IMR-90 (cell line): ENCODE measurements at regions of chr6 and their contacts with region 1.

Region 1: GRCh38 chr6:160930547-160931377 is 60.8 kb upstream of the MAP3K4 start:
- DNase-seq: peak; percentile 71
- ATAC-seq: peak; percentile 99
- H3K4me3 ChIP-seq: peak overlapping the region; percentile 46
- H3K27ac ChIP-seq: no peak overlapping the region
- H3K4me1 ChIP-seq: no peaks in the 10 kb centered on the region
- H3K27me3 ChIP-seq: no peaks in the 10 kb centered on the region
- CTCF ChIP-seq: peak; percentile 97
- POLR2A ChIP-seq: peak; percentile 45; the same call in 1 of the 2 replicates
- RAD21 ChIP-seq: peak; percentile 98

Region 2: DNA sequence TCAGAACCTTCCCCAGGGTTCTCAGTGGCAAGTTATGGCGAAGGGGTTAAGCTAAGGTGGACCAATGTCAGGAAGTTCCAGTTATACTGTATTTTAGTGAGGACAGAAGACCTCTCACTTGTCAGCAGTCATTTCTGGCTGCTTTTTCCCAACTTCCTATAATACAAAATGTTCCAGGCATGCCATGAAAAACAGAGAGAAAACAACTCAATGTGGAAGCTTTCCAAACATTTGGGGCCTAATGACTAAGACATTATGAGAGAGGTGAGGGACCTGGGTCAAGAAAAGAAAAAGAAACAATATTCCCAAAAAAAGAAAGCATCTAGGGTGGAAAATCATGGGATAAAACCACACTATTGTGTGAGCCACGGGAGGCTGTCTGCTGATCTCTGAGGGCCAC is 39.1 kb before region 1 on chr6:
- CTCF ChIA-PET with region 1: no interaction called
- POLR2A ChIA-PET with region 1: no interaction called
- dilution Hi-C with region 1: no loop called
- in situ Hi-C with region 1: no loop called
- intact Hi-C with region 1: no loop called
- DNase-seq: no peak
- ATAC-seq: no peak
- H3K4me3 ChIP-seq: no peak overlapping the region
- H3K27ac ChIP-seq: no peak overlapping the region
- H3K4me1 ChIP-seq: no peaks in the 10 kb centered on the region
- H3K27me3 ChIP-seq: no peaks in the 10 kb centered on the region
- CTCF ChIP-seq: no peak
- POLR2A ChIP-seq: no peak
- RAD21 ChIP-seq: no peak

Region 3: DNA sequence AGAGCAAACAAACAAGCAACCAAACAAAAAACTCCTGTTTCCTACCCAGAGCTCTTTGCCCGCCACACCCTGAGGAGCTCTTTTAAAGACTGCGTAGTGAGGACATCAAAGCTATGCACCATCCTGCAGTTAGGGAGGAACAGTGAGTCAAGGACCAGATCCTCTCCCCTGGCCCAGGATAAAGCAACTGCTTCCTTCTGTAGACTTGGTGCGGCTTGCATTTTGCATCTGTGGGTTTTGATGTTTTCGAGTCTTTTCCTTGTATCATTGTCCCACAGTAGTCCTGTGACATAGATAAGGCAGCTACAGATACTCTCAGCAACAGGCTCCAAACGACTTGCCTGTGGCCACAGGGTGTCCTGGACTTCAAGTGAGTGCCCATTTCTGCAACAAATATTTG is 24.7 kb after region 1 on chr6:
- CTCF ChIA-PET with region 1: no interaction called
- POLR2A ChIA-PET with region 1: no interaction called
- dilution Hi-C with region 1: no loop called
- in situ Hi-C with region 1: no loop called
- intact Hi-C with region 1: no loop called
- DNase-seq: no peak
- ATAC-seq: no peak
- H3K4me3 ChIP-seq: no peak overlapping the region
- H3K27ac ChIP-seq: no peak overlapping the region
- H3K4me1 ChIP-seq: peaks cover under 1% of the 10 kb centered on the region; the same call in 1 of the 2 replicates
- H3K27me3 ChIP-seq: peaks cover 9% of the 10 kb centered on the region
- CTCF ChIP-seq: no peak
- POLR2A ChIP-seq: no peak
- RAD21 ChIP-seq: no peak

Region 4: GRCh38 chr6:160972111-160972510 is 41.3 kb after region 1 on chr6:
- CTCF ChIA-PET with region 1: interaction called, 4 read pairs
- POLR2A ChIA-PET with region 1: no interaction called
- dilution Hi-C with region 1: no loop called
- in situ Hi-C with region 1: no loop called
- intact Hi-C with region 1: loop called (anchors 1 kb)
- DNase-seq: peak; percentile 97
- ATAC-seq: peak; percentile 62
- H3K4me3 ChIP-seq: no peak overlapping the region
- H3K27ac ChIP-seq: peak overlapping the region; percentile 72; the same call in 1 of the 2 replicates
- H3K4me1 ChIP-seq: peaks cover 25% of the 10 kb centered on the region
- H3K27me3 ChIP-seq: peaks cover 1% of the 10 kb centered on the region; the same call in 1 of the 2 replicates
- CTCF ChIP-seq: no peak
- POLR2A ChIP-seq: no peak
- RAD21 ChIP-seq: no peak

Region 5: GRCh38 chr6:160992061-160992979 is 61.6 kb after region 1 on chr6:
- CTCF ChIA-PET with region 1: interaction called, 7 read pairs
- POLR2A ChIA-PET with region 1: no interaction called
- dilution Hi-C with region 1: no loop called
- in situ Hi-C with region 1: no loop called
- intact Hi-C with region 1: loop called (anchors 1 kb)
- DNase-seq: peak; percentile 70
- ATAC-seq: peak; percentile 57
- H3K4me3 ChIP-seq: peak overlapping the region; percentile 95
- H3K27ac ChIP-seq: peak overlapping the region; percentile 84
- H3K4me1 ChIP-seq: no peaks in the 10 kb centered on the region; the same call in 1 of the 2 replicates
- H3K27me3 ChIP-seq: no peaks in the 10 kb centered on the region
- CTCF ChIP-seq: peak; percentile 63
- POLR2A ChIP-seq: peak; percentile 80; the same call in 1 of the 2 replicates
- RAD21 ChIP-seq: peak; percentile 67

Region 6: GRCh38 chr6:161101517-161101916 is 170.8 kb after region 1 on chr6:
- CTCF ChIA-PET with region 1: interaction called, 4 read pairs
- POLR2A ChIA-PET with region 1: no interaction called
- dilution Hi-C with region 1: no loop called
- in situ Hi-C with region 1: no loop called
- intact Hi-C with region 1: loop called (anchors 5 kb)
- DNase-seq: peak; percentile 17
- ATAC-seq: no peak
- H3K4me3 ChIP-seq: no peak overlapping the region
- H3K27ac ChIP-seq: no peak overlapping the region
- H3K4me1 ChIP-seq: peaks cover 2% of the 10 kb centered on the region; the same call in 1 of the 2 replicates
- H3K27me3 ChIP-seq: no peaks in the 10 kb centered on the region
- CTCF ChIP-seq: peak; percentile 40
- POLR2A ChIP-seq: no peak
- RAD21 ChIP-seq: peak; percentile 57